Activated B cell treated with CpG ODN at 0.5 μM for 24 hours (primary cell): ENCODE measurements at regions of chr17 and their contacts with region 1.

Region 1: GRCh38 chr17:76726231-76726775 is at the start of gene JMJD6:
- DNase-seq: peak; percentile 83
- ATAC-seq: peak; percentile 75
- H3K4me3 Mint-ChIP-seq: peak within 1 kb of the TSS; percentile 96
- H3K27ac Mint-ChIP-seq: peak within 1 kb of the TSS; percentile 95
- H3K4me1 Mint-ChIP-seq: peaks cover 48% of the 10 kb centered on the region
- H3K27me3 Mint-ChIP-seq: no peaks in the 10 kb centered on the region
- CTCF ChIP-seq: no peak
- total RNA-seq, gene JMJD6: 32.7 and 33.1 TPM in 2 replicates

Region 2: DNA sequence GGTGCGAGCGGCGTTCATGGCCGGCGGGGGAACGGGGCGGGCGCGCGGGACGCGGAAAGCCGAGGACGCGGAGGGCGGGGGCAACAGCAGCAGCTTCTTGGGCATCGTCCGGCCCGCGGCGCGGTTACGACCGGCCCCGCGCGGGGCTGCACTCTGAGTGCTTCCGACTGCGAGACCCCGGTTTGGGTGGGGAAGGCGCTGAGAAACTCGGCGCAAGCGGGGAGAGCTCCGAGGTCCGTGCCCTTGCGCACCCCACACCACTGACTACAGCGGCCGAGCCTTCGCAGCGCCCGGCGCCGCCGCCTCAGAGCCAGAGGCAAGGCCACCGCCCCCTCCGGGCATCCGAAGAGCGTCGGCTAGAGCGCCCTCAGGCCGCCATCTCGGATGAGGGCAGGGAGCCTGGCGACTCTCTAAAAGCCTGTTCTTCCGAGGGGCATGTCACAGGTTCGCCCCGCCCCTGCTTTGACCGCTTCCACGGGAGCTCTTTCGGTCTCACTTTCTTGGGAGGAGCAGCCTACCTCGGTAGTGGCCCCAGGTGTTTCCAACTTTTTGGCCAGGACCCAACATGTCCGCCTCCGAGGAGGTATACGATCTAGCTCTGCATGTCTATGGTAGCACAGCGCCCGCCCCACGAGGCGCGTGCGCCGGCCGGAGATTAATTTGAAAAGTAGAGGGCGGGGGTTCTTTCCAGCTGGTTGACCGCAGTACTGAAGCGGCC is 372.5 kb before region 1 on chr17 and contains the start of gene PRPSAP1:
- CTCF ChIA-PET with region 1: no interaction called
- POLR2A ChIA-PET with region 1: no interaction called
- intact Hi-C with region 1: loop called (anchors 5 kb)
- DNase-seq: peak; percentile 83
- ATAC-seq: peak; percentile 93
- H3K4me3 Mint-ChIP-seq: peak within 1 kb of the TSS; percentile 94
- H3K27ac Mint-ChIP-seq: peak within 1 kb of the TSS; percentile 98
- H3K4me1 Mint-ChIP-seq: peaks cover 23% of the 10 kb centered on the region
- H3K27me3 Mint-ChIP-seq: no peaks in the 10 kb centered on the region
- CTCF ChIP-seq: no peak
- total RNA-seq, gene PRPSAP1: 26.7 and 27.1 TPM in 2 replicates

Region 3: DNA sequence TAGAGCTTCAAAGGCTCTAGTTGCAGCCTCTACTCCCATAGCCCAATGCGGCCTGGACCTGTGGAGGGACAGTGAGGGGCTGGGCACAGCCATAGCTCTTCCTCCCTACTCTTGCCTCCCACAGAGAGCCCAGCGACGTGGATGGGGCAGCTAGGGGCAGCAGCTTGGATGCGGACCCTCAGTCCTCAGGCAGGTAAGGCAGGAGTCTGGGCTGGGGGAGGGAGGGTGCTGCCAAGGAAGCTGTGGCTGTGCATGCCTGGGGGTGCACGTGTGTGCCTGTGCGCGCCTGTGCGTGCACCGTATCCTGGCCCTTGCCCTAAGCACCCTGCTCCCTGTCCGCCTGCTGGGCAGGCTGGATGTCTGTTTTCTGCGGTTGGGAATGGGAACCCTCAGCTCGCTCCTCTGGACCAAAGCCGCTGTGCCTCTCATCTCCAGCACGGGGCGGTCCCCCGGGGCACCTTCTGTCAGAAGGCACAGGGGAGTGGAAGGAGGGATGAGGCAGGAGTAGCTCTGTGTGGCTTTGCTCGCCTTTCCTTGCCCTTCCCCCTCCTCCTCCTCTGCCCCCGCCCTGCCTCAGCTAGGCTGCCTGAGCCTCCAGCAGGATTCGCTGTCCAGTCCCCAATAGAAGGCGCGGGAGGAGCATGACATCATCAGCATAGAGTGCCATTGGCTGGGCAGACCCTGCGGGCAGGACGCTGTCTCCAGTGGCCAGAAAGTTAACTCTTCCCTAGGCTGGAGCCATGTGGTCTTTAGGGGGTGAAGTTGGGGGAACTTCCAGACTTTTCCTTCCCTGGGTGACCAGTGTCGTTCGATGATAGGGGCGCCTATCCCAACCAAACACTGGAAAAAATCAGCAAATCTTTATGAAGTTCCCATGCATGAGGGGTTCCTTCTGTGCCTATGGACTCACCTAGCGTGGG is 185.7 kb before region 1 on chr17:
- CTCF ChIA-PET with region 1: no interaction called
- POLR2A ChIA-PET with region 1: interaction called, 11 read pairs
- intact Hi-C with region 1: no loop called
- DNase-seq: no peak
- ATAC-seq: peak; percentile 63
- H3K4me3 Mint-ChIP-seq: no peak overlapping the region
- H3K27ac Mint-ChIP-seq: no peak overlapping the region
- H3K4me1 Mint-ChIP-seq: peaks cover 21% of the 10 kb centered on the region
- H3K27me3 Mint-ChIP-seq: peaks cover 21% of the 10 kb centered on the region
- CTCF ChIP-seq: no peak

Region 4: DNA sequence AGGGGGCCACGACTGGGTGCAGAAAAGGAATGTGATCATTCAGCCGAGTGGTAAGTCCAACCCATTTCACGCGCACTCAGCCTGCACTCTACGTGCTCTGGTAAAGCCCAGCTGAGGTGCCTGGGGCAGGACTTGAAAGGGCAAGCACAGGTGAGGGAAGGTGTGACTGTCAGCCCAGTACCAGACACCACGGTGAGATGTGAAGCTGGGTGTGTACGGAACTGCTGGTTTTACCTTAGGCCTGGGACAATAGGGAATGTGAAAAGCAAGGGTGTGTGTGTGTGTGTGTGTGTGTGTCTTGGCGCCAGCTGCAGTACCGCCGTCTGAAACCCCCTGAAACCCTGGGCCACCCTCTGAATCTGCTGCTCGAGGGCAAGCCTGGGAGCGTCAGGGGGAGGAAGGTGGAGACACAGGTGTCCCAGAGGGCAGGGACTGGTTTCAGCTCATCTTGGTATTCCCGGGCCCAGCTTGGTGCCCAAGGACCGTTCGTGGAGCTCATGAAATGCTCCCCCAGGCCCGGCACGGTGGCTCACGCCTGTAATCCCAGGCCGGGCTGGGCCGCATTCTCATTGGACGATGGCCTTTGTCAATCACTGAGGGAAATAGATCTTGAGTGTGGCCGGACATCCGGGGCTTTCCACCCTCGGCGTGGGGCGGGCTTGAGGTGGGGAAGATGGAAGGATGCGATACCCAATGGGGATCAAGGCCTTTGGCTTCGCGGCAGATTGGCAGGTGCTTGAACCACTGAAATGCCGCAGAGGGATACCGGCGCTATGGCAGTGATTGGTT is 55.0 kb before region 1 on chr17:
- CTCF ChIA-PET with region 1: no interaction called
- POLR2A ChIA-PET with region 1: interaction called, 8 read pairs
- intact Hi-C with region 1: loop called (anchors 1 kb)
- DNase-seq: peak; percentile 91
- ATAC-seq: peak; percentile 99
- H3K4me3 Mint-ChIP-seq: peak overlapping the region; percentile 91
- H3K27ac Mint-ChIP-seq: peak overlapping the region; percentile 90
- H3K4me1 Mint-ChIP-seq: peaks cover 22% of the 10 kb centered on the region
- H3K27me3 Mint-ChIP-seq: peaks cover 10% of the 10 kb centered on the region
- CTCF ChIP-seq: no peak

Region 5: GRCh38 chr17:76737082-76737675 is 10.9 kb after region 1 on chr17 and contains the start of gene SRSF2:
- CTCF ChIA-PET with region 1: interaction called, 4 read pairs
- POLR2A ChIA-PET with region 1: interaction called, 218 read pairs
- intact Hi-C with region 1: loop called (anchors 1 kb)
- DNase-seq: peak; percentile 99
- ATAC-seq: peak; percentile 74
- H3K4me3 Mint-ChIP-seq: peak within 1 kb of the TSS; percentile 97
- H3K27ac Mint-ChIP-seq: peak within 1 kb of the TSS; percentile 96
- H3K4me1 Mint-ChIP-seq: peaks cover 50% of the 10 kb centered on the region
- H3K27me3 Mint-ChIP-seq: no peaks in the 10 kb centered on the region
- CTCF ChIP-seq: no peak
- total RNA-seq, gene SRSF2: 335 and 367 TPM in 2 replicates

Region 6: DNA sequence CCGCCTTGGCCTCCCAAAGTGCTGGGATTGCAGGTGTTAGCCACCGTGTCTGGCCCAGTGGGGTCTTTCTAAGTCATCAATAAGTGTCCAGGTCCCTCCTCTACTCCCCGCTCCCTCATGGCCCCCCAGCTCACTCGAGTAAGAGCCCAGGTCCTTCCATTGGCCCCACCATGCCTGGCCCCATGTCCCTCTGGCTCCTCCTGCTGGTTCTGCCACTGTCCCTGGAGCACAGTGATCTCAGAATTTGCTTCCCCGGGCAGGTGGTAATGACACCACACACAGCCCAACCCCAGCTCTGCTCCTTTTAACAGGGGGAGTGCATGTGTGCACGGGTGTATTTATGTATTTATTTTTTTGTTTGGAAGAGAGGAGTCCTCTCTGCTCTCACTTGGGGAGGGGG is 161.5 kb after region 1 on chr17:
- CTCF ChIA-PET with region 1: no interaction called
- POLR2A ChIA-PET with region 1: no interaction called
- intact Hi-C with region 1: no loop called
- DNase-seq: no peak
- ATAC-seq: no peak
- H3K4me3 Mint-ChIP-seq: no peak overlapping the region
- H3K27ac Mint-ChIP-seq: no peak overlapping the region
- H3K4me1 Mint-ChIP-seq: no peaks in the 10 kb centered on the region
- H3K27me3 Mint-ChIP-seq: peaks cover 7% of the 10 kb centered on the region
- CTCF ChIP-seq: no peak

Region 7: GRCh38 chr17:77465358-77466041 is 739.2 kb after region 1 on chr17:
- CTCF ChIA-PET with region 1: no interaction called
- POLR2A ChIA-PET with region 1: interaction called, 5 read pairs
- intact Hi-C with region 1: loop called (anchors 10 kb)
- DNase-seq: peak; percentile 62
- ATAC-seq: peak; percentile 81
- H3K4me3 Mint-ChIP-seq: peak overlapping the region; percentile 75
- H3K27ac Mint-ChIP-seq: peak overlapping the region; percentile 93
- H3K4me1 Mint-ChIP-seq: peaks cover 94% of the 10 kb centered on the region
- H3K27me3 Mint-ChIP-seq: no peaks in the 10 kb centered on the region
- CTCF ChIP-seq: no peak

Region 8: DNA sequence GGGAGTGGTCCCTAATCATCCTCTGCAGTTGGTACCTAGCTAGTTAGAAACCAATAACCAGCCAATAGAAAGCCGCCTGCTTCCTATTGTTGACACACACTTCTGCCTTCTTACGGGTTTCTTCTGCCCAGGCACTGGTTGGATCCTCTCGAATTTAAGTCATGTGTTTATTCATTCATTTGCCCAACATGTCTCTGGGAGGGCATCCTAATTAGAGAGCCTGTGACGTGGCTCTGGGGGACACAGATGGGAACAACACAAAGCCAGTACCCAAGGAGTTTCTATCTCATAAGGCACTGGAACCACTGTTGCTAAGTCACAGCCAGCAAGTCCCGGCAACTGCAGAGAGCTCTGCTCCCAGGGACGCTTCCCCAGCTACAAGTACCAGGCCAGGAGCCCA is 931.5 kb after region 1 on chr17:
- CTCF ChIA-PET with region 1: no interaction called
- POLR2A ChIA-PET with region 1: no interaction called
- intact Hi-C with region 1: no loop called
- DNase-seq: no peak
- ATAC-seq: no peak
- H3K4me3 Mint-ChIP-seq: no peak overlapping the region
- H3K27ac Mint-ChIP-seq: no peak overlapping the region
- H3K4me1 Mint-ChIP-seq: no peaks in the 10 kb centered on the region
- H3K27me3 Mint-ChIP-seq: peaks cover 25% of the 10 kb centered on the region
- CTCF ChIP-seq: no peak